PC-9 (cell line): ENCODE measurements at regions of chr7 and their contacts with region 1.

Region 1: DNA sequence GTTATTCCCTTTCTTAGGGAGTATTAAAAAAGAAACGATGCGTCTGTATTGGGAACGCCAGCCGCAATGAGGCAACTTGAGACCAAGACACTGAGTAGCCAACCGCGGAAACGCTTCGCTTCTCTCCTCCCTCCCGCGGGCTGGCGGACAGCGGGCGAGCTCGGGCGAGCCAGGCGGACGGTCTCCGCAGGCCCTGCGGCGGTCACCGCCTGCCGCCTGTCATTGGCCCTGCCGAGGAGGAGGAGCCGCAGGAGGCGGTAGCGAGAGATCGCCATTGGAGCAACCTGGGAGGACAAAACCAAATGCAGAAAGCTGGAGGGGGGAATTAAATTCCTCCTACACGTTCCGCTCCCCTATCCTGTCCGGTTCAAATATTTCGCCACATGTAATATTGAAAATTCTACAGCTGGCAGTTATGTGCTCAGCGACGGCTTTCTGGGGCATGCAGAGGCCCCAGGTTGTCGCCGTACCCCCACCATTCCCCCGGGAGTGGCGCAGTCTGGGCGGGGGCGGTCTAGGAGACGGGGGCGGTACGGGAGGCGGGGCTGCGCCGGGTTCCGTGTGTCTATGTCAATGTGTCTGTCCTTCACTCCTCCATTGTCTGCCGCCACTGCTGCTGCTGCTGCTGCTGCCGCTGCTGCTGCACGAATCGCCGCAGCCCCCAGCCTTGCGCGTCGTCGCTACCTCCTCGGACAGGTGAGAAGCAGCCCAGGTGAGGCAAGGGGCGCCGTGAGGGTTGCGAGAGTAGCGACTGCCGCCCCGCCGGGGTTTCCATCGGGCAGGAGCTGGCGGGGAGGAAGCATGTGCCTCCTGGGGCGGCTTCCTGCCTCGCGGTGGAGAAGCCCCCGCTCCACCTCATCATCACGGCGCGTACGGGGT is at the starts of genes ANKMY2 and BZW2:
- DNase-seq: peak; percentile 96 to 98
- H3K4me3 ChIP-seq: peak within 1 kb of the TSS; percentile 77
- H3K27ac ChIP-seq: peak within 1 kb of the TSS; percentile 82
- H3K4me1 ChIP-seq: peaks cover 51% of the 10 kb centered on the region
- H3K27me3 ChIP-seq: no peaks in the 10 kb centered on the region
- CTCF ChIP-seq: no peak
- total RNA-seq, gene ANKMY2: 22.9 and 30.7 TPM in 2 replicates
- total RNA-seq, gene BZW2: 93.7 and 102 TPM in 2 replicates

Region 2: DNA sequence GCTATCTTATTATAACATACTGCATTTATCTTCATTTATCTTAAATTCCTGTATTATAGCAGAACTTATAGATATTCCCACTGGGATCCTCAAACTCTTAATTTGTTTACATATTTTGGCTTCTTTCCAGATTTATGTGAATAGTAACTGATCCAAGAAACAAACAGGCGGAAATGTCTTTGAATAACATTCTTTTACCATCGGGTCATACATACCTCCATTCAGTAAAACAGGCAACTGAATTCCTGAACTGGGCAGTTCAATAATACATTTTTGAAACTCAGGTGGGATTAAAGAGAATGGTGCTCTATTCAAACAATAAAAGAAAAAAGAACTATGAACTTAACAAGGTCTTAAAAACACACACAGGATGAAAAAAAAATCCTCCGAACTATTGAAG is 561.9 kb before region 1 on chr7:
- CTCF ChIA-PET with region 1: no interaction called
- POLR2A ChIA-PET with region 1: no interaction called
- intact Hi-C with region 1: loop called (anchors 2 kb)
- DNase-seq: peak in 1 of 2 experiments; percentile 81
- H3K4me3 ChIP-seq: no peak overlapping the region
- H3K27ac ChIP-seq: peak overlapping the region; percentile 3; the same call in 1 of the 2 replicates
- H3K4me1 ChIP-seq: peaks cover 15% of the 10 kb centered on the region
- H3K27me3 ChIP-seq: no peaks in the 10 kb centered on the region
- CTCF ChIP-seq: no peak

Region 3: GRCh38 chr7:16420649-16421332 is 225.0 kb before region 1 on chr7:
- CTCF ChIA-PET with region 1: no interaction called
- POLR2A ChIA-PET with region 1: interaction called, 4 read pairs
- intact Hi-C with region 1: loop called (anchors 5 kb)
- DNase-seq: peak; percentile 90 to 92
- H3K4me3 ChIP-seq: peak overlapping the region; percentile 68
- H3K27ac ChIP-seq: peak overlapping the region; percentile 89
- H3K4me1 ChIP-seq: peaks cover 56% of the 10 kb centered on the region
- H3K27me3 ChIP-seq: no peaks in the 10 kb centered on the region
- CTCF ChIP-seq: peak; percentile 53; the same call in 1 of the 2 replicates

Region 4: DNA sequence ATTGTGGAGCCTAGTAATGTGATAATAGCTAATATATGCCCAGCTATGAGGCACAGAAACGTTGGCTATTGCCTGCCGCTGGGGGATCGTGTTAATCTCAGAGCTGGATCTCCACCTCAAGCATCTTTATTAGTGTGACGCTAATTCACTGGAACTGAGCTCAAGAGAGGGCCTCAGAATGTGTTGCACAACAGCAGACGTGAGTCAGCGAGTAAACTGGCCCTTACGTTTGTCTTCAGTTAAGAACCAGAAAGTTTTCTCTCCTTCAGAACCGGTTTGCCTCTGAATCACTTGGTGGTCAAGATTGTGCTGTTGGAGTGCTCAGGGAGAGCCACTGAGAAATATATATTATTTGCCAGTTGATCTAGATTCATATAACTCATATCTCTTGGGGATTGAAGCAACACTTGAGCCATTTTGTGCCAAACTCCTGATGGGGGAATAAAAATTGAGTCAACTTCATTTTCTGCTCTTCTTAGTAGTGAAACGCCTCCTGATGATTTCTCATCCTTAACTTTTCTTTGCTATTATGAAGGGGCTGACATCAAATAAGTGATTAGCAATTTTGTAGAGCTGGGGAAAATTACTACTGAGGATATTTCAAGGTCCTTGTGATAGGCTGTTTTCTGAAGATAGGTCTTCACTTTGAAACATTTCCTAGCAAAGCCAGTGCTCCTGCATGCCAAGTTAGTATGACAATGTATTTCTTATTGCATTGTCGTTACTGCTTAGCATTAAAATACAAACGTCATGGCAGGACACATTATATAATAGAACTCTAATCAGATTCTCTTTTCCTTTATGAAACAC is 22.4 kb after region 1 on chr7:
- CTCF ChIA-PET with region 1: no interaction called
- POLR2A ChIA-PET with region 1: interaction called, 19 read pairs
- intact Hi-C with region 1: loop called (anchors 1 kb)
- DNase-seq: peak; percentile 88 to 100
- H3K4me3 ChIP-seq: peak overlapping the region; percentile 19; the same call in 1 of the 2 replicates
- H3K27ac ChIP-seq: peak overlapping the region; percentile 82
- H3K4me1 ChIP-seq: peaks cover 36% of the 10 kb centered on the region
- H3K27me3 ChIP-seq: no peaks in the 10 kb centered on the region
- CTCF ChIP-seq: peak; percentile 54; the same call in 1 of the 2 replicates

Region 5: DNA sequence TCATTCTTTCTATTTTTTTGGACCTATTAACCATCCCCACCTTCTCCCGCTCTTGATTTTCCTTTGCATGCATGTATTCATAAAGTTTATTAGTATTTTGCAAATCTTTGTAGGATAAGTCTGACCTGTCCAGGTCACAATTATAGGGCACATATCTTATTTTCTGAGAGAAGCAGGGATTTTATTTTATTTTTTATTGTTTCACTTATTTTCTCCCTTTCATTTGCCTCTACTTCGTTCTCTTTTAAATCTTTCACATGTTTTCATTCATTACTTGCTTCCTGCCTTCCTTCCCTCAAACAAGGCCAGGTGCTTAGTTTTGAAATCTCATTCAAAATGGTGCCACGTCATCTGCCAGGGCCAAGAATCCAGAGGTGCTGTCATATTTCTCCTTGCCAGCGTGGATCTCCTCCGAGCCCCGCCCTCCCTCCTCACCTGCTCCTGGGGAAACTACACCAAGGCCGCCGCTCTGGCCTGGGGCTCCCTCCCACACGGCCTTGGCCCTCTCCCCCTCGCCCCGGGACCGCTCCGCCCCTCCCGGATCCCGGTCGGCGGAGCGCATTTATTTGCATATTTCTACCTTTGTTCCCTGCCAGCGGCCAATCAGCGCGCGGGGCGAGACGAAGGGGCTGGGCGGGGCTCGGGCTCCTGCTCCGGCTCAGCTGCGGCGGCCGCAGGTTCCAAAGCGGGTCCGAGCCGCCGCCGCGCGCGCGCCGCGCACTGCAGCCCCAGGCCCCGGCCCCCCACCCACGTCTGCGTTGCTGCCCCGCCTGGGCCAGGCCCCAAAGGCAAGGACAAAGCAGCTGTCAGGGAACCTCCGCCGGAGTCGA is 107.5 kb after region 1 on chr7 and contains the start of gene TSPAN13:
- CTCF ChIA-PET with region 1: no interaction called
- POLR2A ChIA-PET with region 1: interaction called, 4 read pairs
- intact Hi-C with region 1: loop called (anchors 5 kb)
- DNase-seq: peak; percentile 97 to 99
- H3K4me3 ChIP-seq: peak within 1 kb of the TSS; percentile 65
- H3K27ac ChIP-seq: peak within 1 kb of the TSS; percentile 60
- H3K4me1 ChIP-seq: peaks cover 28% of the 10 kb centered on the region
- H3K27me3 ChIP-seq: no peaks in the 10 kb centered on the region
- CTCF ChIP-seq: no peak
- total RNA-seq, gene TSPAN13: 26.5 and 31.1 TPM in 2 replicates